ENCODE measurements at regions of chr7 and their contacts with region 1.

Region 1: DNA sequence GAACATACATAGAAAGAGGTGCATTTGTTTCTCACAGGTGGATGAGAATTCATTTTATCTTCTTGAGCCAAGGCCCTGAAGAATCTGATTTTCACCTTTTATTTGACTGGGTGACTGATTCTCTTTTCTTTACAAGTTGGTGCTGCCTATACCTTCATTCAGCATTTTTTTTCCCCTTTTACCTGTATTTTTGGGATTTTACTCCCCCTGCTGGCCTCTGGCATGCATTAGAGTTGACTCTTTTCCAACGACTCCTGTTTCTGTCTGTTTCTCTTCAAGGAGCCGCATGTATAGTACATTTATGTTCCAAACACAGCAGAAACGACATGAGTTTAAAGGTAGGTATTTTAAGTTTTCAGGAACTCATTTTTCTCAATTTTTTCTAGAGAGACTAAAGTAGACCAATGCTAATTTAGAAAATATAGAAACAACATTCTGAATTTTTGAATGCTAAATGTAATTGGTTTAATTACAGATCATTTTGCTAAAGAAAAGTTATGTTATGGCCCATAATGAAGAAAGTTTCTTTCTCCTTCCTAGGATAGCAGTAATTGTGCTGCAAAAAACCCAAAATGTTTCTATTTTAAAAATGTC is 149.8 kb upstream of the HDAC9 start:
- DNase-seq: peak; percentile 36
- H3K4me3 ChIP-seq: no peak overlapping the region
- H3K27ac ChIP-seq: no peak overlapping the region
- H3K4me1 ChIP-seq: no peaks in the 10 kb centered on the region
- H3K27me3 ChIP-seq: no peaks in the 10 kb centered on the region
- CTCF ChIP-seq: peak; percentile 84 to 87

Region 2: DNA sequence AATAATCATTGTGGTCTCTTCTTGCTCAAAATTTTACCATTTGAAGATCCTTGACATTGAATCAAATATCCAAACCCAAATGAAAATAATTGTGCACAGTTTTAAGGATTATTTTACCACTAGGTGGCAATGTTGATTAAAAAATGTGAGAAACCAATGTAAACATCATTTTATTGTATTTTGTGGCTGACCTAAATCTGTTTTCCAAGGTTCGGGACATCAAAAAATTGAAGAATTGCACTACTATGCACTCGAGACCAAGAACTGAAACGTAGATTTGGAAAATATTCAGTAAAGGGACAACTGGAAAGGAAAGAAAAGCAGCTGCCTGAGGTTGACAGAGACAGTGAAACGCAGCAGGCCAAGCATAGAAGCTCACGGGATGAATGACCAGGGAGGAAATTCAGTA is 664.8 kb before region 1 on chr7:
- CTCF ChIA-PET with region 1: no interaction called
- dilution Hi-C with region 1: no loop called
- in situ Hi-C with region 1: no loop called
- intact Hi-C with region 1: loop called (anchors 1 kb)
- DNase-seq: peak; percentile 61
- H3K4me3 ChIP-seq: no peak overlapping the region
- H3K27ac ChIP-seq: peak overlapping the region; percentile 94
- H3K4me1 ChIP-seq: peaks cover 50% of the 10 kb centered on the region
- H3K27me3 ChIP-seq: no peaks in the 10 kb centered on the region
- CTCF ChIP-seq: peak; percentile 39 to 43

Region 3: GRCh38 chr7:17706734-17707133 is 639.0 kb before region 1 on chr7:
- CTCF ChIA-PET with region 1: no interaction called
- dilution Hi-C with region 1: no loop called
- in situ Hi-C with region 1: loop called (anchors 10 to 25 kb)
- intact Hi-C with region 1: loop called (anchors 1 kb)
- DNase-seq: peak; percentile 65
- H3K4me3 ChIP-seq: no peak overlapping the region
- H3K27ac ChIP-seq: no peak overlapping the region
- H3K4me1 ChIP-seq: no peaks in the 10 kb centered on the region
- H3K27me3 ChIP-seq: no peaks in the 10 kb centered on the region
- CTCF ChIP-seq: peak; percentile 57 to 82

Region 4: DNA sequence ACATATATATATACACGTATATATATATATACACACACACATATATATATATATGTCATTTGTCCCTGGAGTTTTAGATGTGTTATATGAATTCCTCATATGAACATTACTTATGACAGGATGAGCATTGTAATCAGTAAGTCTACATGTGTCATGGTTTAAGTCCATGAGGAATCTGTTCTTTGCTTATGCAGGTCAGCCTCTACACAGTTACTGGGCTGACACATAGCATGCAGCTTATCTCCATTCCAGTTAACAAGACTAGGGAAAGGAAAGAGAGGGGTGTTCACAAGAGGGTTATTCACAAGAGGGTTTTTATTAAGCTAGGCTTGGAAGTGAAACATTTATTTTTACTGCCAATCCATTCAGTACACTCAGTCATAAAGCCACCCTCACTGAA is 632.2 kb before region 1 on chr7:
- CTCF ChIA-PET with region 1: no interaction called
- dilution Hi-C with region 1: no loop called
- in situ Hi-C with region 1: loop called (anchors 10 to 25 kb)
- intact Hi-C with region 1: no loop called
- DNase-seq: no peak
- H3K4me3 ChIP-seq: no peak overlapping the region
- H3K27ac ChIP-seq: no peak overlapping the region
- H3K4me1 ChIP-seq: no peaks in the 10 kb centered on the region
- H3K27me3 ChIP-seq: no peaks in the 10 kb centered on the region
- CTCF ChIP-seq: no peak

Region 5: GRCh38 chr7:17971411-17971810 is 374.3 kb before region 1 on chr7:
- CTCF ChIA-PET with region 1: no interaction called
- dilution Hi-C with region 1: no loop called
- in situ Hi-C with region 1: no loop called
- intact Hi-C with region 1: loop called (anchors 5 kb)
- DNase-seq: no peak
- H3K4me3 ChIP-seq: no peak overlapping the region
- H3K27ac ChIP-seq: no peak overlapping the region
- H3K4me1 ChIP-seq: no peaks in the 10 kb centered on the region
- H3K27me3 ChIP-seq: no peaks in the 10 kb centered on the region
- CTCF ChIP-seq: peak in 1 of 2 donors; percentile 17

Region 6: GRCh38 chr7:18808026-18808425 is 462.3 kb after region 1 on chr7:
- CTCF ChIA-PET with region 1: no interaction called
- dilution Hi-C with region 1: no loop called
- in situ Hi-C with region 1: no loop called
- intact Hi-C with region 1: no loop called
- DNase-seq: no peak
- H3K4me3 ChIP-seq: no peak overlapping the region
- H3K27ac ChIP-seq: no peak overlapping the region
- H3K4me1 ChIP-seq: peaks cover 11% of the 10 kb centered on the region
- H3K27me3 ChIP-seq: no peaks in the 10 kb centered on the region
- CTCF ChIP-seq: no peak

Region 7: GRCh38 chr7:19665399-19666008 is 1319.8 kb after region 1 on chr7:
- CTCF ChIA-PET with region 1: no interaction called
- dilution Hi-C with region 1: no loop called
- in situ Hi-C with region 1: loop called (anchors 25 kb)
- intact Hi-C with region 1: no loop called
- DNase-seq: peak; percentile 11
- H3K4me3 ChIP-seq: no peak overlapping the region
- H3K27ac ChIP-seq: no peak overlapping the region
- H3K4me1 ChIP-seq: peaks cover 4% of the 10 kb centered on the region
- H3K27me3 ChIP-seq: no peaks in the 10 kb centered on the region
- CTCF ChIP-seq: peak; percentile 52 to 64

Measured in mammary epithelial cell (primary cell).